ENCODE measurements at regions of chr3 and their contacts with region 1.

Region 1: GRCh38 chr3:49939858-49940666 is at the start of gene RBM6:
- DNase-seq: peak; percentile 94
- H3K4me3 ChIP-seq: peak within 1 kb of the TSS; percentile 91
- H3K27ac ChIP-seq: peak within 1 kb of the TSS; percentile 98
- H3K27me3 ChIP-seq: no peaks in the 10 kb centered on the region
- CTCF ChIP-seq: no peak
- polyA plus RNA-seq, gene RBM6: 48.4 and 62.8 TPM in 2 replicates

Region 2: DNA sequence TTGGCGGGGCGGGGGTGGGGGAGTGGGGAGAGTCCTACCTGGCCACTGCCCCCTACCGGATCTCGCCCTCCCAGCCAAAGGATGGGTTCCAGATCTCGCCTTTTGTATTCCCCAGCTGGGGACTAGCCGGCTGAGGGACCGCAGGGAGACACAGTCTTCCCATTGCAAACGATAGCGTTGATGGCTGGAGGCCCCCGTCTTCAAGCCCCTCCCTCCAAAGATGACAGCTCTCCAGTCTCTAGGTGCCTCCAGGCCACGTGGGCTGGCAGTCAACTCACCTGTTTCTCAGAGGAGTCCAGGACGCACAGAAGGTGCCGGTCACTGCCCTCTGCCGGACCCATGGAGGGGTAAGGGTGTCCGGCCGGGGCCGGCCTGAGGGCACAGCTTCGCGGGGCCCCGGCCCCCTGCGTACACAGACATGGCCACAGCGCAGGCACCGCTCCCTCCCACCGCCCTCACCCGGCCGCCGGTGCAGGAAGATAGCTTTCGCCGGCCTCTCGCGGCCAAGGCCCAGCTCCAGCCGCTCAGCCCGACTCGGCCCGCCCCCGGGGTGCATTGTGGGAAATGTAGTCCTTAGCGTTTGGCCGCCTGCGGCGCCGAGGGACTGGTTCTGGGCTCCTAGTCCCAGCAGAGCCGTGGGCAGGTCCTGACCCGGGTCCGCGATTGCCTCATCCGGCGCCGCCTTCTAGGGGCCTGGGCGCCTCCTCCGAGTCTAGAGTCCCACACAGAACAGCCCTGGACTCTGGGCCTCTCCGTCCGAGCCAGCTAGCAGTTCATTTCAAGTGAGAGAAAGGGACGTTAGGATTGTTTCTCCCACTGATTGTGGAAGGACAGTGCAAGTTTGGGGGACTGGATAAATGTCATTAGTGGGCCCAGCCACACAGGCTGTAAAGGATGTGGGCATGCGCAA is 10.5 kb before region 1 on chr3 and contains the start of gene MON1A:
- CTCF ChIA-PET with region 1: no interaction called
- POLR2A ChIA-PET with region 1: interaction called, 24 read pairs
- DNase-seq: peak; percentile 55
- H3K4me3 ChIP-seq: peak within 1 kb of the TSS; percentile 79
- H3K27ac ChIP-seq: peak within 1 kb of the TSS; percentile 33
- H3K27me3 ChIP-seq: no peaks in the 10 kb centered on the region
- CTCF ChIP-seq: peak; percentile 23
- polyA plus RNA-seq, gene MON1A: 7.1 and 8.1 TPM in 2 replicates

Region 3: GRCh38 chr3:49955636-49956035 is 15.6 kb after region 1 on chr3:
- CTCF ChIA-PET with region 1: interaction called, 3 read pairs
- POLR2A ChIA-PET with region 1: interaction called, 10 read pairs
- DNase-seq: no peak
- H3K4me3 ChIP-seq: no peak overlapping the region
- H3K27ac ChIP-seq: no peak overlapping the region
- H3K27me3 ChIP-seq: no peaks in the 10 kb centered on the region
- CTCF ChIP-seq: no peak

Region 4: DNA sequence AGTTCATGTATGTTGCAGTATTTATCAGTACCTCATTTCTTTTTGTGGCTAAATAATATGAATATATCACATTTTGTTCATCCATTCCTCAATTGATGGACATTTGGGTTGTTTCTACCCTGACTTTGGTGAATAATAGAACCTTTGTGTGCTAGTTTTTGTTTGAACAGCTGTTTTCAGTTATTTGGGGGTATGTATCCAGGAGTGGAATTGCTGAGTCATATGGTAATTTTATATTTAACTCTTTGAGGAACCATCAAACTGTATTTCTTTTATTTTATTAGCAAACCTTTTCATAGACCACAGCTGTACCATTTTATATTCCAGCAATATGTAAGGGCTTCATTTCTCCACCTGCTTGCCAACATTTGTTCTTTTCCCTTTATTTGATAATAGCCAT is 110.3 kb after region 1 on chr3:
- CTCF ChIA-PET with region 1: no interaction called
- POLR2A ChIA-PET with region 1: interaction called, 11 read pairs
- DNase-seq: peak; percentile 32
- H3K4me3 ChIP-seq: no peak overlapping the region
- H3K27ac ChIP-seq: no peak overlapping the region
- H3K27me3 ChIP-seq: no peaks in the 10 kb centered on the region
- CTCF ChIP-seq: no peak

Region 5: DNA sequence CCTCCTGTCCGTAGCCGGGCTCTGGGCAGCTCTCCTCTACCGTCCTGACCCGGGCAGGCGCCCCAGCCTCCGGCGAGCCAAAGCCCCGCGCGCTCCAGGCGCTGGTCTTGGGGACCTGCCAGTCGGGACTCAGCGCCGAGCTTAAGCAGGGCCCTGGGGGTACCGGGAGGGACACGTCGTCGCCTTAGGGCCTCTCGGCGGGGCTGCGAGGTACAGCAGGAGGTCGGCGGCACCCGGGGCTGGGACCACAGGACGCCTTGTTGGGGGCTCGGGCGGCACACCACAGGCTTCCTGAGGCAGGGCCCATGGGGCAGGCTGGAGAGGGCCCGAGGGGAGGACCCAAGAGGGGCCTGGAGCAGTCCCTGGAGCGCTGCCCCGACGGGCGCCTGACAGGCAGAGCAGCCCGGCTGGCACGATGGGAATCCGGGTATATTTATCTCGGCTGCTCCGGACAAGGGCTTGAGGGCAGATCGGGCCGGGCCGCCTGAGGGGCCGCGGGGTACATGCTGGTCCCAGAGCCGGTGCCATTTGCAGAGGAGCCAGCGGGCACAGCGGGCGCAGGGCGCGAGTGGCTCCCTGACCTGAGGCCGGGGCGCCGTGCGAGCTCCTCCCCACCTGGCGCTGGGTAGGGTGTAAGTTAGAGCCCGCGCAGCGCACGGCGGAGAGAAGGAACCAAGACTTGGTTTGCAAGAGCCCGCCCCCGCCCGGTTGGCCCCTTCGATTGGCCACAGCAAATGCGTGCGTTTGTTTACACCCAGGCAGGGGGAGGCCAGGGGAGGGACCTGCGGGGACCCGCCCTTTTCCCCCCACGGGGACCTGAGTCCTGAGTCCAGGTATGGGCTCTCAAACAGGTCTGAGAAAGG is 265.6 kb after region 1 on chr3:
- CTCF ChIA-PET with region 1: no interaction called
- POLR2A ChIA-PET with region 1: no interaction called
- DNase-seq: no peak
- H3K4me3 ChIP-seq: peak overlapping the region; percentile 46
- H3K27ac ChIP-seq: no peak overlapping the region
- H3K27me3 ChIP-seq: peaks cover 55% of the 10 kb centered on the region
- CTCF ChIP-seq: no peak

Measured in AG04450 (cell line).